Activated CD8-positive, alpha-beta T cell treated with anti-CD3 and anti-CD28 coated beads, Interleukin-2, amount 10 ng/mL, durations not matched to agents 7 days and 5 days (primary cell): ENCODE measurements at regions of chr19 and their contacts with region 1.

Region 1: GRCh38 chr19:46022431-46023310 is at the start of gene PGLYRP1:
- DNase-seq: no peak
- ATAC-seq: no peak
- H3K4me3 Mint-ChIP-seq: no peak within 1 kb of the TSS
- H3K27ac Mint-ChIP-seq: no peak within 1 kb of the TSS
- H3K4me1 Mint-ChIP-seq: peaks cover 13% of the 10 kb centered on the region
- H3K27me3 Mint-ChIP-seq: peaks cover 14% of the 10 kb centered on the region
- total RNA-seq, gene PGLYRP1: not detected

Region 2: DNA sequence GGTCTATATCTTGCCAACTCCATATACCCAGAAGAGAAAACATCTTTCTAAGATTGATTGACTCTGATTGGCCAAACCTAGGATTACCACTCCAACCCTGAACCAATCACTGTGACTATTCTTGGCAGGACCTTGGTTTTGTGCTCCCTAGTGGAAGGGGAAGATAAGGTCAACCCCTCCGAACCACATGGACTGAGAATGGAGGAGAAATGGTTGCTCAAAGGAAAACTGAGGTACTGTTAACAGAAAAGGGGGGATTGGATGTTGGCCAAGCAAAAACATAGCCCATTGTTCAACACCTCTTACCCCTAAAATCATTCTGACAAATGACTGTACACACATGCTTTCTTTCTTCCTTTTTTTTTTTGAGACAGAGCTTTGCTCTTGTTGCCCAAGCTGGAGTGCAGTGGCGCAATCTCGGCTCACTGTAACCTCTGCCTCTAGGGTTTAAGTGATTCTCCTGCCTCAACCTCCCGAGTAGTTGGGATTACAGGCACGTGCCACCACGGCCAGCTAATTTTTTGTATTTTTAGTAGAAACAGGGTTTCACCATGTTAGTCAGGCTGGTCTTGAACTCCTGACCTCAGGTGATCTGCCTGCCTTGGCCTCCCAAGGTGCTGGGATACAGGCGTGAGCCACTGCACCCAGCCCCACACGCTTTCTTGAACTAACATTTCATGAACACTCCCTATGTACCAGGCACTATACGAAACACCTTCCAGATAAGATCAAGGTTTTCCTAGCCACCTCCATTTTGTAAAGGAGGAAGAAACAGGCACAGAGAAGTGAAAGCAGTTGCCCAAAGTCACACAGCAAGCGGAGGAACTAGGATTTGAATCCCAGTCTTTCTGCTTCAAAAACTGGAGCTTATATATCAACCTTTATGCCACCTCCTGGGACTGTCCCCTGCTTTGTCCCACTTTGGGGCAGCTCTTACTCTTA is 282.9 kb before region 1 on chr19:
- CTCF ChIA-PET with region 1: no interaction called
- POLR2A ChIA-PET with region 1: no interaction called
- DNase-seq: no peak
- ATAC-seq: no peak
- H3K4me3 Mint-ChIP-seq: no peak overlapping the region
- H3K27ac Mint-ChIP-seq: no peak overlapping the region
- H3K4me1 Mint-ChIP-seq: no peaks in the 10 kb centered on the region
- H3K27me3 Mint-ChIP-seq: peaks cover 4% of the 10 kb centered on the region

Region 3: GRCh38 chr19:46035986-46036743 is 13.5 kb after region 1 on chr19:
- CTCF ChIA-PET with region 1: no interaction called
- POLR2A ChIA-PET with region 1: no interaction called
- DNase-seq: no peak
- ATAC-seq: no peak
- H3K4me3 Mint-ChIP-seq: no peak overlapping the region
- H3K27ac Mint-ChIP-seq: no peak overlapping the region
- H3K4me1 Mint-ChIP-seq: no peaks in the 10 kb centered on the region
- H3K27me3 Mint-ChIP-seq: peaks cover 8% of the 10 kb centered on the region

Region 4: GRCh38 chr19:46076951-46077816 is 54.5 kb after region 1 on chr19:
- CTCF ChIA-PET with region 1: interaction called, 10 read pairs
- POLR2A ChIA-PET with region 1: no interaction called
- DNase-seq: peak; percentile 39
- ATAC-seq: no peak
- H3K4me3 Mint-ChIP-seq: no peak overlapping the region
- H3K27ac Mint-ChIP-seq: no peak overlapping the region
- H3K4me1 Mint-ChIP-seq: no peaks in the 10 kb centered on the region
- H3K27me3 Mint-ChIP-seq: peaks cover 64% of the 10 kb centered on the region

Region 5: GRCh38 chr19:46283771-46284170 is 261.1 kb after region 1 on chr19:
- CTCF ChIA-PET with region 1: interaction called, 11 read pairs
- POLR2A ChIA-PET with region 1: no interaction called
- DNase-seq: no peak
- ATAC-seq: no peak
- H3K4me3 Mint-ChIP-seq: no peak overlapping the region
- H3K27ac Mint-ChIP-seq: no peak overlapping the region
- H3K4me1 Mint-ChIP-seq: no peaks in the 10 kb centered on the region
- H3K27me3 Mint-ChIP-seq: peaks cover 5% of the 10 kb centered on the region